MCF 10A (cell line): ENCODE measurements at regions of chr12 and their contacts with region 1.

Region 1: DNA sequence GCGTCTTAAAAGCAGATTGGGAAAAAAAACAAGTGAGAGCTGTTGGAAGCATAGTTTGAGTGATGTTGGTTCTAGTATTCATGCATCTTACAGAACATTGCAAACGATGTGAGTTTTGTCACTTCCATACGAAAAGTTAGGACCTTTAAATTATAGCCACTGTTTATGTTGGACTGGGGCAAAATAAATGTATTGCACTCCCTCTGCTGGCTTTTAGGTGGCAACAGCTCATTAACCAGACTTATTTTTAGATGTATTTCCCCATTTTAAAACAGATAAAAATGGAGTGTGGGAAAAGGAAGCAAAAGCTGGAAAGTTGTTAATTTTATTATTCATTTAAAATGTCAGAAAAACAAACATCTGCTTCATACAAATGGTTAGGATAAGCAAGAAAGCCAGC is 111.9 kb downstream of the LGR5 start:
- DNase-seq: peak; percentile 41
- H3K4me3 Mint-ChIP-seq: no peak overlapping the region
- H3K27ac Mint-ChIP-seq: no peak overlapping the region
- H3K4me1 Mint-ChIP-seq: no peaks in the 10 kb centered on the region
- H3K27me3 Mint-ChIP-seq: no peaks in the 10 kb centered on the region
- CTCF ChIP-seq: peak; percentile 44

Region 2: GRCh38 chr12:71250166-71250565 is 301.4 kb before region 1 on chr12:
- CTCF ChIA-PET with region 1: no interaction called
- POLR2A ChIA-PET with region 1: no interaction called
- intact Hi-C with region 1: no loop called
- DNase-seq: peak; percentile 12
- H3K4me3 Mint-ChIP-seq: no peak overlapping the region
- H3K27ac Mint-ChIP-seq: no peak overlapping the region
- H3K4me1 Mint-ChIP-seq: peaks cover 7% of the 10 kb centered on the region
- H3K27me3 Mint-ChIP-seq: peaks cover 6% of the 10 kb centered on the region
- CTCF ChIP-seq: no peak

Region 3: GRCh38 chr12:71420775-71421406 is 130.6 kb before region 1 on chr12:
- CTCF ChIA-PET with region 1: interaction called, 74 read pairs
- POLR2A ChIA-PET with region 1: interaction called, 4 read pairs
- intact Hi-C with region 1: no loop called
- DNase-seq: no peak
- H3K4me3 Mint-ChIP-seq: no peak overlapping the region
- H3K27ac Mint-ChIP-seq: no peak overlapping the region
- H3K4me1 Mint-ChIP-seq: peaks cover 4% of the 10 kb centered on the region
- H3K27me3 Mint-ChIP-seq: no peaks in the 10 kb centered on the region
- CTCF ChIP-seq: no peak